Mammary epithelial cell (primary cell): ENCODE measurements at regions of chr9 and their contacts with region 1.

Region 1: GRCh38 chr9:136488247-136489214 is 5.7 kb upstream of the SEC16A start:
- DNase-seq: peak; percentile 43
- H3K4me3 ChIP-seq: no peak overlapping the region
- H3K27ac ChIP-seq: no peak overlapping the region
- H3K4me1 ChIP-seq: peaks cover 19% of the 10 kb centered on the region
- H3K27me3 ChIP-seq: no peaks in the 10 kb centered on the region
- CTCF ChIP-seq: peak; percentile 89 to 96

Region 2: GRCh38 chr9:136625101-136626060 is 136.8 kb after region 1 on chr9:
- CTCF ChIA-PET with region 1: interaction called, 30 read pairs
- dilution Hi-C with region 1: no loop called
- in situ Hi-C with region 1: loop called (anchors 5 kb)
- intact Hi-C with region 1: loop called (anchors 1 kb)
- DNase-seq: peak; percentile 58
- H3K4me3 ChIP-seq: no peak overlapping the region
- H3K27ac ChIP-seq: no peak overlapping the region
- H3K4me1 ChIP-seq: peaks cover 54% of the 10 kb centered on the region
- H3K27me3 ChIP-seq: no peaks in the 10 kb centered on the region
- CTCF ChIP-seq: peak; percentile 18 to 67